ENCODE measurements at regions of chr12 and their contacts with region 1.

Region 1: GRCh38 chr12:91138337-91138920 is 27.1 kb upstream of the LUM start:
- DNase-seq: no peak
- ATAC-seq: peak; percentile 52
- H3K4me3 Mint-ChIP-seq: no peak overlapping the region
- H3K27ac Mint-ChIP-seq: no peak overlapping the region
- H3K4me1 Mint-ChIP-seq: peaks cover 9% of the 10 kb centered on the region; the same call in 1 of the 2 replicates
- H3K27me3 Mint-ChIP-seq: no peaks in the 10 kb centered on the region
- CTCF ChIP-seq: no peak

Region 2: GRCh38 chr12:91023326-91024004 is 115.0 kb before region 1 on chr12:
- CTCF ChIA-PET with region 1: no interaction called
- POLR2A ChIA-PET with region 1: no interaction called
- DNase-seq: no peak
- ATAC-seq: no peak
- H3K4me3 Mint-ChIP-seq: no peak overlapping the region
- H3K27ac Mint-ChIP-seq: no peak overlapping the region
- H3K4me1 Mint-ChIP-seq: no peaks in the 10 kb centered on the region
- H3K27me3 Mint-ChIP-seq: no peaks in the 10 kb centered on the region
- CTCF ChIP-seq: no peak

Region 3: DNA sequence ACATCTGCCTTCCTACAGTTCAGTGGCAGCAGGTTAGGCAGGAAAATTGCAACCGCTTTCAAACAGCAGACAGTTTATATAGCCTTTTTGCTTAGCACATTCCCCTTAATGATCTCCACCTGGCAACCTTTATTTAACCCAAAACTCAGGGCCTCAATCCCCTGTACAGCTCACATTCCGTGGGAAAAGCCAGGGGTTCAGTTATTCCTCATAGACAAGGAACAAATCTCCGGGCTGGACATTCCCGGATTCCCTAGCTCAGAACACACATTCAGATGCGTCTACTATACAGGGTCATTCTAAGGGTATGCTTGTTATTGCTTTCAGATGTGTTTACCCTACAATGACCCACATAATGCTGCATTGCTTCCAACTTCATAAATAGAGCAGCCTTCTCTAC is 118.0 kb after region 1 on chr12:
- CTCF ChIA-PET with region 1: no interaction called
- POLR2A ChIA-PET with region 1: no interaction called
- DNase-seq: no peak
- ATAC-seq: no peak
- H3K4me3 Mint-ChIP-seq: no peak overlapping the region
- H3K27ac Mint-ChIP-seq: no peak overlapping the region
- H3K4me1 Mint-ChIP-seq: no peaks in the 10 kb centered on the region
- H3K27me3 Mint-ChIP-seq: no peaks in the 10 kb centered on the region
- CTCF ChIP-seq: no peak

Region 4: GRCh38 chr12:92424338-92424737 is 1285.9 kb after region 1 on chr12:
- CTCF ChIA-PET with region 1: no interaction called
- POLR2A ChIA-PET with region 1: interaction called, 11 read pairs
- DNase-seq: peak; percentile 14
- ATAC-seq: peak; percentile 95
- H3K4me3 Mint-ChIP-seq: no peak overlapping the region
- H3K27ac Mint-ChIP-seq: peak overlapping the region; percentile 80
- H3K4me1 Mint-ChIP-seq: peaks cover 45% of the 10 kb centered on the region
- H3K27me3 Mint-ChIP-seq: no peaks in the 10 kb centered on the region
- CTCF ChIP-seq: no peak